CD8-positive, alpha-beta T cell (primary cell): ENCODE measurements at regions of chr15 and their contacts with region 1.

Region 1: GRCh38 chr15:42121682-42122081 is 27.3 kb upstream of the PLA2G4D start:
- DNase-seq: no peak
- ATAC-seq: no peak
- H3K4me3 ChIP-seq: no peak overlapping the region
- H3K4me3 Mint-ChIP-seq: no peak overlapping the region
- H3K27ac ChIP-seq: no peak overlapping the region
- H3K27ac Mint-ChIP-seq: no peak overlapping the region
- H3K4me1 ChIP-seq: no peaks in the 10 kb centered on the region
- H3K4me1 Mint-ChIP-seq: no peaks in the 10 kb centered on the region
- H3K27me3 ChIP-seq: no peaks in the 10 kb centered on the region
- H3K27me3 Mint-ChIP-seq: no peaks in the 10 kb centered on the region
- CTCF ChIP-seq: no peak

Region 2: DNA sequence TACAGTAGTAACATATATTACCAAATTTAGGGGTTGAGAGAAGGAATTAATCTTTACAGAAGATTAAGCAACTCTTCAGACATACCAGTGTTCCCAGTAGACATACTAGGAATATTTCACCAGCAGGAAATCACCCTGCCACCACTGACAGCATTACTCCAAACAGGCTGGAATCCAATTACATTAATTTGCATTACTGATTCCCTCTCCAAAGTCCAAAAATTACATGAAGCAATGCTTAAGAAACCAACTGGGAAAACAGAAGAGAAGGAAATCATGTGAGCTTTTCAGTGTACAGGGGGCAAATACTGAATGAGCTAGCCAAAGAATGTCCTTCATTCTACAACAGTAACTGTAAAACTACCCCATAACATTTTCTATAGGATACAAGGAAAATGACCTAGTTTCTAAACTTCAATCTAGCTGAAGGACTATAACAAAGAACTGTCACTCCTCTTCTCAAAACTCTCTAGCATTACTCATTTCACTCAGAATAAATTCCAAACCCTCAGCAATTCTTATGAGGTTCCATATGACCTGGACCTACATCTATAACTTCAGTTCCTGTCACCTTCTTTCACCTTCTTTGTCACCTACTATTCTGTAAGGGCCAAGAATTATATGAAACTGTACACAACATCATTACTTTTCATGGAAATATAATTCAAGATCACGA is 1078.3 kb before region 1 on chr15:
- CTCF ChIA-PET with region 1: no interaction called
- POLR2A ChIA-PET with region 1: no interaction called
- intact Hi-C with region 1: no loop called
- DNase-seq: no peak
- ATAC-seq: no peak
- H3K4me3 ChIP-seq: no peak overlapping the region
- H3K4me3 Mint-ChIP-seq: no peak overlapping the region
- H3K27ac ChIP-seq: no peak overlapping the region
- H3K27ac Mint-ChIP-seq: no peak overlapping the region
- H3K4me1 ChIP-seq: no peaks in the 10 kb centered on the region
- H3K4me1 Mint-ChIP-seq: no peaks in the 10 kb centered on the region
- H3K27me3 ChIP-seq: no peaks in the 10 kb centered on the region
- H3K27me3 Mint-ChIP-seq: no peaks in the 10 kb centered on the region
- CTCF ChIP-seq: no peak

Region 3: GRCh38 chr15:42094512-42094963 is 27.1 kb before region 1 on chr15 and contains the start of gene PLA2G4D:
- CTCF ChIA-PET with region 1: no interaction called
- POLR2A ChIA-PET with region 1: no interaction called
- intact Hi-C with region 1: loop called in 1 of 2 experiments (anchors 1 kb)
- DNase-seq: no peak
- ATAC-seq: no peak
- H3K4me3 ChIP-seq: no peak within 1 kb of the TSS
- H3K4me3 Mint-ChIP-seq: no peak within 1 kb of the TSS
- H3K27ac ChIP-seq: no peak within 1 kb of the TSS
- H3K27ac Mint-ChIP-seq: no peak within 1 kb of the TSS
- H3K4me1 ChIP-seq: no peaks in the 10 kb centered on the region
- H3K4me1 Mint-ChIP-seq: no peaks in the 10 kb centered on the region
- H3K27me3 ChIP-seq: no peaks in the 10 kb centered on the region
- H3K27me3 Mint-ChIP-seq: no peaks in the 10 kb centered on the region
- CTCF ChIP-seq: no peak
- total RNA-seq, gene PLA2G4D: not detected